ENCODE measurements at regions of chr16 and their contacts with region 1.

Region 1: DNA sequence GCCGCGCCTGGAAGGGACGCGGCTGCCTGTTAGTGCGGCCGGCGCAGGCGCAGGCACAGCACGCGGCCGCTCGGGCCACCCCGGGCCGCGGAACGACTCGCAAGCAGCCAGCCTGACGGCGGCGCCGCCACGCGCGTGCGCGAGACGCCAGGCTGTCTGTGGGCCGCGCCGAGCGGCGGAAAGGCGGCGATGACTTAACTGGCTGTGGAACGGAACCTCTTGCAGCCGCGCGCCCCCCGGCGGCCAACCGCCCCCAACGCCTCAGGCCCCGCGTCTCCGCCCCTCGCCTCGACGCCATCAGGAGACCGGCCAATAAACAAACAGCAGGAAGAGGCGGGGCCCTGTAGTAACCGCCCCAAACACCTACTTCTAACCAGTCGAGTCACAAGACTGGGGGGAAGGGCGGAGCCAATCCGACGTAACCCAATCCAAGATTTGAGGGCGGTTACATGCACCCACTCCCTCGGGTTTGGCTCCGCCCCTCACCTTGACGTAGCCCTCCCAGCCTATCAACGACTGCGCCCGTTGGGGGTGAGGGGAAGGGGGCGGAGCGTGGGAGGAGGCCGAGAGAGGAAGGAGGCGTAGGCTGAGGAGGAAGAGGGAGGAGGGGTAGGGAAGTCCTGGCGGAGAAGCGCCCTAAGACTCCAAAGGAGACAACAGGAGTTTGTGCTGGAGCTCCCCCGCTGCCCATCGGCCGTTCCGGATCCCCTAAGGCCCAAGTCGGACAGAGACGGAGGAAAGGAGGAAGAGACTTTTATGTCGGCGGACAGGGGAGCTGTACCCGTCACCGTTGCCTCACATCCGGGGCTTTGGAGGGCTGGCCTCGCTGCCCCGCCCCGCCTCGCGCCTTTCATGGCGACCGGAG is at the start of gene FBRS:
- DNase-seq: peak; percentile 98 to 100 (median 100)
- ATAC-seq: peak; percentile 84
- H3K4me3 ChIP-seq: peak within 1 kb of the TSS; percentile 83
- H3K4me3 Mint-ChIP-seq: peak within 1 kb of the TSS; percentile 81 to 99 (median 96)
- H3K27ac ChIP-seq: peak within 1 kb of the TSS; percentile 94
- H3K27ac Mint-ChIP-seq: peak within 1 kb of the TSS; percentile 99 to 100 (median 100)
- H3K4me1 ChIP-seq: peaks cover 38 to 42% of the 10 kb centered on the region in 2 donors
- H3K4me1 Mint-ChIP-seq: peaks cover 19 to 50% (median 40%) of the 10 kb centered on the region in 7 donors
- H3K27me3 ChIP-seq: no peaks in the 10 kb centered on the region
- H3K27me3 Mint-ChIP-seq: no peaks in the 10 kb centered on the region
- total RNA-seq, gene FBRS: 143 to 174 (median 164) TPM

Region 2: DNA sequence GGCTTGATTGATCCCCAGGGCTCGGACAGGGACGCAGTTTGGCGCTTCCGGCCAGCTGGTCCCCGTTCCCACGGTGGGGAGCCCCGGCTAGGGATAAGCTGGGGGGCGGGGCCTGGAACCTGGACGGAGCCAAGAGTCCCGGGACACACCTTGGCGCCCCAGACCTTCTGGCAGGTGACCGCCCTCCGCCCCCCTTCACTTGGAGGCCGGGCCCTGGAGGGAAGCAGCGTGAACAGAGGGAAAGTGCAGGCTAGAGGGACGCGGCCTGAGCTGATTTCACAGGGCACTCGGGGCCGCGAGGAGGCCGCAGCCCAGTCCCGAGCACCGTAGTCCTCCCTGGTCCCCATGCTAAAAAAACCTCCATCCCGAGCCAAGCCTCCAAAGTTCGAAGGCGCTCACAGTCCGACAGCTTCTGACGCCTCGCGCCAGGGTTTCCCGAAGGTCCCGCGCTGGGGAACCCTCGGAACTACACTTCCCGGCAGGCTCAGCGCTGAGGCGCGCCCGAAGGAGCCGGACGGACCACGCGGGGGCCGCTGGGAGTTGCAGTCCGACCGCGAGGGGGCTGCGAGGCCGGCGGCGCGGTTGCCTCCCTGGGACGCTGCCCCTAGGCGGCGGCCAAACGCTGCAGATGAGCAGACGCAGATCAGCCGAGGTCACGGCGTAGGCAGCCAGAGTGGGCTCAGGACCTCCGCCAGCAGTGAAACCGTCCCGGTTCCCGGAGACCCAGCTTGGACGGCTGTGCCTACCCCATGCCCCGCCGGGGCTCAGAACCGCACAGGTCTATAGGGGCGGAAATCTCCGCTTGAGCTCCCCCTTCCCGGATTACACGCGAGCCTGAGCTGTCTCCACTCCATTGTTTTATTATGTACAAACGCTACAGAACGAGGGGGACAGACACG is 566.4 kb before region 1 on chr16 and contains the start of gene TBX6:
- CTCF ChIA-PET with region 1: no interaction called
- POLR2A ChIA-PET with region 1: no interaction called
- intact Hi-C with region 1: loop called in 1 of 2 experiments (anchors 10 kb)
- DNase-seq: peak; percentile 85 to 96 (median 91)
- ATAC-seq: peak; percentile 87
- H3K4me3 ChIP-seq: peak within 1 kb of the TSS; percentile 60
- H3K4me3 Mint-ChIP-seq: peak within 1 kb of the TSS; percentile 87 to 96 (median 93)
- H3K27ac ChIP-seq: peak within 1 kb of the TSS; percentile 77
- H3K27ac Mint-ChIP-seq: peak within 1 kb of the TSS; percentile 92 to 97 (median 95)
- H3K4me1 ChIP-seq: peaks cover 32 to 47% of the 10 kb centered on the region in 2 donors
- H3K4me1 Mint-ChIP-seq: peaks cover 43 to 65% (median 50%) of the 10 kb centered on the region in 7 donors
- H3K27me3 ChIP-seq: no peaks in the 10 kb centered on the region
- H3K27me3 Mint-ChIP-seq: no peaks in the 10 kb centered on the region
- total RNA-seq, gene TBX6: 1.5 to 3.3 (median 1.6) TPM

Region 3: GRCh38 chr16:30472328-30472942 is 185.7 kb before region 1 on chr16 and contains the start of gene ITGAL:
- CTCF ChIA-PET with region 1: no interaction called
- POLR2A ChIA-PET with region 1: interaction called, 4 read pairs
- intact Hi-C with region 1: loop called in 1 of 2 experiments (anchors 1 kb)
- DNase-seq: peak; percentile 41 to 89 (median 84)
- ATAC-seq: peak; percentile 89
- H3K4me3 ChIP-seq: peak within 1 kb of the TSS; percentile 74
- H3K4me3 Mint-ChIP-seq: peak within 1 kb of the TSS; percentile 83 to 100 (median 98)
- H3K27ac ChIP-seq: peak within 1 kb of the TSS; percentile 84
- H3K27ac Mint-ChIP-seq: peak within 1 kb of the TSS; percentile 88 to 98 (median 96)
- H3K4me1 ChIP-seq: peaks cover 60 to 63% of the 10 kb centered on the region in 2 donors
- H3K4me1 Mint-ChIP-seq: peaks cover 43 to 83% (median 57%) of the 10 kb centered on the region in 7 donors
- H3K27me3 ChIP-seq: no peaks in the 10 kb centered on the region
- H3K27me3 Mint-ChIP-seq: no peaks in the 10 kb centered on the region
- total RNA-seq, gene ITGAL: 258 to 629 (median 436) TPM

Region 4: DNA sequence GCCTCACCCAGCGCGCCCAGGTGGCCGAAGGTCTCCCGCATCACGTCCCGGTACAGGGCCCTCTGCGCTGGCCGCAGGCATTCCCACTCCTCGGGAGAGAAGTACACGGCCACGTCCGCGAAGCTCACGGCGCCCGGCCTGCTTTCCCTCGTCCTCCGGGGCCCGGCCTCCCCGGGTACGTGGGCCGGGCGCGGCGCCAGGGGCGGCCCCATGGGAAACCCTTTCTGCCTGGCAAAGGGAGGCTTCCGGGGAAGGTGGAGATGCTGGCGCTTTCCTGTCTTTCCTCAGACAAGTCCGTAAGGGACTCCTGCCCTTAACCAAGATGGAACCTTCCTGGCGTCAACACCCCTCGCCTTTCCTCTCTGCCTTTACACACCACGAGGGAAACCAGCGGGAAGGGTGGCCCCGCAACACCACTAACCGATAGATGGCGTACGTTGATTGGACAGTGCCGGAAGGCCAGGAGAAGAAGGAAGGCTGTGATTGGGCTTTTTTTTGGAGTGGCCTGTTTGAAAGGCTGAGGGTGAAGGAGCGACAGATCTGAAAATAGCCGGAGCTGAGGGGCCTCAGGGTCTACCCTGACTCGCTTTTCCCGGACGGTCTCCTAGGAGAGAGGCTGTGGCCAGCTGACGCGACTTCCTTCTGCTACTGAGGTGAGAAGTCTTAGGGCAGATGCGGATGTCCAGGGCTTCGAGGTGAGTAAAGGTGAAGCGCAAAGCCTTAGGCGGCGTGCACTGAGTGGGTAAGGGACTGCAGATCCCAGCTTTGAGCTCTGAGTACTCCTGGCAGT is 72.5 kb before region 1 on chr16 and contains the start of gene ZNF785:
- CTCF ChIA-PET with region 1: no interaction called
- POLR2A ChIA-PET with region 1: interaction called, 9 read pairs
- intact Hi-C with region 1: loop called in 1 of 2 experiments (anchors 1 kb)
- DNase-seq: peak; percentile 72 to 95 (median 93)
- ATAC-seq: peak; percentile 100
- H3K4me3 ChIP-seq: peak within 1 kb of the TSS; percentile 77
- H3K4me3 Mint-ChIP-seq: peak within 1 kb of the TSS; percentile 85 to 98 (median 94)
- H3K27ac ChIP-seq: peak within 1 kb of the TSS; percentile 81
- H3K27ac Mint-ChIP-seq: peak within 1 kb of the TSS; percentile 89 to 95 (median 92)
- H3K4me1 ChIP-seq: peaks cover 8 to 12% of the 10 kb centered on the region in 2 donors
- H3K4me1 Mint-ChIP-seq: peaks cover 6 to 44% (median 32%) of the 10 kb centered on the region in 7 donors
- H3K27me3 ChIP-seq: no peaks in the 10 kb centered on the region
- H3K27me3 Mint-ChIP-seq: peaks cover 0 to 2% (median 0%) of the 10 kb centered on the region in 5 donors
- total RNA-seq, gene ZNF785: 10.2 to 37.1 (median 21.4) TPM

Region 5: DNA sequence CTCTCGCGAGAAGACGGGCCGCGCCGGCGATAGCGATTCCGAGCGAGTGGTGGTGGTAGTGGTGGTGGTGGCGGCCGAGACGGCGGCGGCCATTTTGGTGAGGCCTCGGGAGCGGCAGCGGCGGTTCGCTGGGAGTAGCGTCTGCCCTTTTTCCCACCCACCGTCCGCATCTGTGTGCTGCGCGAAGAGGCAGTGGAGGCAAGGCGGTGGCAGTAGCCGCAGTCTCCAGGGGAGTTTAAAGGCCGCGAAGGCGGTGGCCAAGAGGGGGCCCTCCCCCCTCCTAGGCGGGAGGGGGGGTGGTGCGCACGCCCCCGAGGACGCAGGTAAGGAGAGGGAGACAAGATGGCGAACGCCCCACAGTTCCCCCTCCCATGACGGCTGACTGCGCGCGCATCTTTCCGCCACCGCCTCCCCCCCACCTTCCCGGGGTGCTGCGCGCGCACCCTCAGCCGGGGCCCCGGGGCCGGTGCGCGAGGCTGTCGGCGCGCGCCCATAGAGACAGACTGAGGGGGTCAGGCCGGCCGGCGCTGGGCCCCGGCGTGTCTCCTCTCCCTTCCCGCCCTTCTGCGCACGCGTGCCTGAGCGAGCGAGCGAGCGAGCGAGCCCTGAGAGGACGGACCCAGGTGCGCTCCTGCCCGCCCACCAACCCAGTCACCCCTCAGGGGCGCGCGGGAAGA is 40.2 kb after region 1 on chr16:
- CTCF ChIA-PET with region 1: interaction called, 50 read pairs
- POLR2A ChIA-PET with region 1: interaction called, 113 read pairs
- intact Hi-C with region 1: loop called (anchors 1 kb)
- DNase-seq: peak; percentile 98 to 100 (median 99)
- ATAC-seq: peak; percentile 86
- H3K4me3 ChIP-seq: peak overlapping the region; percentile 86
- H3K4me3 Mint-ChIP-seq: peak overlapping the region; percentile 87 to 99 (median 97)
- H3K27ac ChIP-seq: peak overlapping the region; percentile 99
- H3K27ac Mint-ChIP-seq: peak overlapping the region; percentile 99 to 100 (median 100)
- H3K4me1 ChIP-seq: peaks cover 15 to 35% of the 10 kb centered on the region in 2 donors
- H3K4me1 Mint-ChIP-seq: peaks cover 26 to 48% (median 41%) of the 10 kb centered on the region in 7 donors
- H3K27me3 ChIP-seq: no peaks in the 10 kb centered on the region
- H3K27me3 Mint-ChIP-seq: no peaks in the 10 kb centered on the region

Region 6: DNA sequence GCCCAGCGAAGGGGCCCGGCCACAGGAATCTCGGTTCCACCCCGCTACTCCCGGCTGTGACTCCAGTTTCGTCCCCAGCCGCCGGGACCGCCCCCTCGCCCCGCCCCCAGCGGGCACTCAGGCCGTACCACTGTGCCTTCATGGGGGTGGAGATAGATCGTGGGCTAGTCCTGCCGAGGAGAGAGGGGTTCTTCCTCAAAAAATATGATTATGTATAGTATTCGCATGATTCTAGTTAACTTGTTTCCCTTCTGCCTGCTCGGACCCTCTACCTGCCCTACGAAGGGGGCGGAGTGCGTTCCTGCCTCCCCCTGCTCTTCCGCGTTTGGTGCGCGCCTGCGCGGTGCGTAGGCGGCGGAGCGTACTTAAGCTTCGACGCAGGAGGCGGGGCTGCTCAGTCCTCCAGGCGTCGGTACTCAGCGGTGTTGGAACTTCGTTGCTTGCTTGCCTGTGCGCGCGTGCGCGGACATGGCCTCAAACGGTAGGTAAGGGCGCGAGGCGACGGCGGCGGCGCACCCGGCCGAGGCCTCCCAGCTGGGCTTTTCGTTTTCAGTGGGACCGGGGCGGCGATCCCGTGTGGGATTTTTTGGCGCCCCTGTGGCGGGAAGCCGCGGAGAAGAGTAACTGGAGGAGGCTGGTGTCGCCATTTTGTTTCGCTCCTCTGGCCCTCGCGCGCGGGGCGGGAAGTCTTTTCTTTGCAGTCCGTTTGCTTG is 521.8 kb after region 1 on chr16 and contains the start of gene FUS:
- CTCF ChIA-PET with region 1: no interaction called
- POLR2A ChIA-PET with region 1: interaction called, 6 read pairs
- intact Hi-C with region 1: loop called in 1 of 2 experiments (anchors 2 kb)
- DNase-seq: peak; percentile 88 to 97 (median 95)
- ATAC-seq: peak; percentile 87
- H3K4me3 ChIP-seq: peak within 1 kb of the TSS; percentile 76
- H3K4me3 Mint-ChIP-seq: peak within 1 kb of the TSS; percentile 92 to 99 (median 96)
- H3K27ac ChIP-seq: peak within 1 kb of the TSS; percentile 90
- H3K27ac Mint-ChIP-seq: peak within 1 kb of the TSS; percentile 96 to 100 (median 99)
- H3K4me1 ChIP-seq: peaks cover 56% of the 10 kb centered on the region in 2 donors
- H3K4me1 Mint-ChIP-seq: peaks cover 49 to 72% (median 56%) of the 10 kb centered on the region in 7 donors
- H3K27me3 ChIP-seq: no peaks in the 10 kb centered on the region
- H3K27me3 Mint-ChIP-seq: peaks cover 0 to 3% (median 0%) of the 10 kb centered on the region in 5 donors
- total RNA-seq, gene FUS: 597 to 956 (median 714) TPM